ENCODE measurements at regions of chr2 and their contacts with region 1.

Region 1: GRCh38 chr2:236569573-236569973 is at the start of gene ACKR3:
- DNase-seq: peak; percentile 89
- ATAC-seq: peak; percentile 92
- H3K4me3 ChIP-seq: peak within 1 kb of the TSS; percentile 73
- H3K27ac ChIP-seq: peak within 1 kb of the TSS; percentile 77
- H3K4me1 ChIP-seq: peaks cover 21% of the 10 kb centered on the region
- H3K27me3 ChIP-seq: no peaks in the 10 kb centered on the region
- CTCF ChIP-seq: peak; percentile 59 to 92 (median 71)
- EP300 ChIP-seq: peak; percentile 68 to 74; a peak in 2 of 4 replicates
- POLR2A ChIP-seq: peak; percentile 88
- RAD21 ChIP-seq: peak; percentile 88
- polyA plus RNA-seq, gene ACKR3: 3.1 to 3.8 TPM

Region 2: DNA sequence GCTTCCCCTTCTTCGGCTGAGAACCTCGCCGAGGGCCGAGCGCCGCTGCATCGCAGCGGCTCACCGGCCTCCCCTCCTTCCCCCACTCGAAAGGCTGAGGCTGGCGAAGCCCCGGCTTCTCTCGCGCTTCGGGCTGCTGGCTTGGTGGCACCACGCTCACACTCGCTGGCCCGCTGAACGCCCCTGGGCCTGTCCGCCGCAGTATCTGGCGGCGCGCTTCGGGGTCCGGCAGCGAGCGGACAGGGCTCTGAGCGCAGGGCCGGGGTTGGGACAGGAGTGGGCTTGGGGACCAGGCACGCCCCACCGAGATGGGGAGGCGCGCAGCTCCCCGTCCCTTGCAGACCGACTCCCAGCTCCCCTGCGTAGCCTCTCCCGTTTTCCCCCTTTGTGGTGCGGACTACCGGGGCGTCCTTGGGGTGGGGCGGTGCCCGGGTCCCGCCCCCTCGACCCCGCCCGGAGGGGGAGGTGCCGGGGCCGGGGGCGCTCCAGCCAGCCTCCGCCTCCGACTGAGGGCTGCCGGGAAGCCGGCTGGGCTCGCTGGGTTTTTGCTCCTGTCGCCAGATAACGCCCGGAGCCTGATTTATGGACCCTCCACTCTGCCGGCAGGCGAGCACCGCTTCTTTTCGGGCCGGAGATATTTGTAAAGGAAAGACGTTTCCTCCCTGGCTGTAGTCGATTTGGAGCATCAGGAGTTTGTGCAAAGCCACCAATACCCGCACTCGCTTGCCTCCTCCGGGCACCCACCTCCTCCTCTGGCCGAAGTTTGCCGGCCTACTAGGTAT is 405.2 kb before region 1 on chr2:
- CTCF ChIA-PET with region 1: no interaction called
- POLR2A ChIA-PET with region 1: no interaction called
- RAD21 ChIA-PET with region 1: no interaction called
- SMC1A ChIA-PET with region 1: no interaction called
- in situ Hi-C with region 1: no loop called
- intact Hi-C with region 1: no loop called
- DNase-seq: no peak
- ATAC-seq: no peak
- H3K4me3 ChIP-seq: no peak overlapping the region
- H3K27ac ChIP-seq: no peak overlapping the region
- H3K4me1 ChIP-seq: no peaks in the 10 kb centered on the region
- H3K27me3 ChIP-seq: peaks cover 3 to 12% of the 10 kb centered on the region in 2 experiments
- CTCF ChIP-seq: no peak
- EP300 ChIP-seq: no peak
- POLR2A ChIP-seq: no peak
- RAD21 ChIP-seq: no peak

Region 3: DNA sequence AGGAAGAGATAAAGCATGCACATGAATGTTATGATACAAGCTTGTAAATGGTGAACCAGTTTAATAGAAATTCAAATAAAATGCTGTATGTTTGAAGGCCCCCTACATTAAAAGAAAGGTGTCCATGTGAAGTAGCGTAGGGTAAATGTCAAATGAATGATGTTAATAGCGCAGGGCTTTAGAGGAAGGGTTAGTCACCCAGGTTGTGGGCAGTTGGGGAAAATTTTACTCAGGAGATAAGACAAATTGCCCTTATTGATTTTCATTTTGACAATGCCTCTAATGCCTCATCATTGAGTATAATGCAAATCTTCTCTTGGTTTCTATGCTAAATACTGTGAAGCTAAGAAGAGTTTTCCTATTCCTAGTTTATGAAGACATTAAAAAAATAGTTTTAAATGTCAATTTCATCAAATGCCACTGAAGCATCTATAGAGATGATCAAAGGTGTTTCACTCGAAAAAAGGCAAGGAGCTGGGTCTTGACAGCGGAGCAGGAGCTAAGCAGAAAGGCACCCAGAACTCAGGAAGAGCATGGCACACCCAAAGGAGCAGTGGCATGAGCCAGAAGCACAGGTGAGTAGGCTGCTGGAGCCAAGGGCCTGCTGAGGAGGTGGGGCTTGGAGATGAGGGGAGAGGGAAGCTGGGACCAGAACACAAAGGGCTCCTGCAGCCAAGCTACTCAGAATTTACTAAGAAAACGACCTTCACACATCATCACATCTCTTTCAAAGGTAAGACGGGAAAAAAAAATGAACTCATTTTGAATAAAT is 129.3 kb before region 1 on chr2:
- CTCF ChIA-PET with region 1: no interaction called
- POLR2A ChIA-PET with region 1: no interaction called
- RAD21 ChIA-PET with region 1: no interaction called
- SMC1A ChIA-PET with region 1: no interaction called
- in situ Hi-C with region 1: no loop called
- intact Hi-C with region 1: no loop called
- DNase-seq: no peak
- ATAC-seq: no peak
- H3K4me3 ChIP-seq: no peak overlapping the region
- H3K27ac ChIP-seq: no peak overlapping the region
- H3K4me1 ChIP-seq: no peaks in the 10 kb centered on the region
- H3K27me3 ChIP-seq: no peaks in the 10 kb centered on the region; a peak in 1 of 4 replicates
- CTCF ChIP-seq: no peak
- EP300 ChIP-seq: no peak
- POLR2A ChIP-seq: no peak
- RAD21 ChIP-seq: no peak

Region 4: DNA sequence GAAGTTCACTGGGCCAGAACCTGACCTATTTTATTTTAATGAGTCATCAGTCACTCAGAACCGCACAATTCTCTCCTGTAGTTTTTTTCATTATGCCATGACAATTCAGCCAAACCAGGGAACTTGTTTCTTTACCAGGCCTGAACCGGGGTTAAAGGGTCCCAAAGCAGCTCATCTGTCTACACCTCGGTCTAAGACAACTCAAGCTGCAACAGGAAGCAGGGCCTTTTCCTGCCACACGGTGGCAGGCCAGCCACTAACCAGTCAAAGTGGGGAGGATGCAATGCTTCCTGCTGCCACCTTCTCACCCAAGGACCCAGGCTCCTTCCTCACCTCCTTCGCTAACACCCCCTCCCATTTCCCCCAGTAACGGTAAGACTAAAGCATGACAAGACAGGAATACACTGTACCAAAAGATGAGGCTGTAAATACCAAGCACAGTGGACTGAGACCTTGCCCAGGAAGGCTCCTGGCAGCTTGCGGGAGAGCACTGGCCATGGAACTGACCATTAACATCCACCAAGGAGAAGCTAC is 56.6 kb before region 1 on chr2:
- CTCF ChIA-PET with region 1: interaction called, 300 read pairs
- POLR2A ChIA-PET with region 1: interaction called, 32 read pairs
- RAD21 ChIA-PET with region 1: interaction called, 275 read pairs
- SMC1A ChIA-PET with region 1: interaction called, 230 read pairs
- in situ Hi-C with region 1: loop called (anchors 5 kb)
- intact Hi-C with region 1: loop called (anchors 1 kb)
- DNase-seq: peak; percentile 45
- ATAC-seq: peak; percentile 99
- H3K4me3 ChIP-seq: no peak overlapping the region
- H3K27ac ChIP-seq: no peak overlapping the region
- H3K4me1 ChIP-seq: peaks cover 5% of the 10 kb centered on the region
- H3K27me3 ChIP-seq: no peaks in the 10 kb centered on the region; a peak in 1 of 4 replicates
- CTCF ChIP-seq: peak; percentile 90 to 92 (median 90)
- EP300 ChIP-seq: no peak
- POLR2A ChIP-seq: no peak
- RAD21 ChIP-seq: peak; percentile 86

Region 5: DNA sequence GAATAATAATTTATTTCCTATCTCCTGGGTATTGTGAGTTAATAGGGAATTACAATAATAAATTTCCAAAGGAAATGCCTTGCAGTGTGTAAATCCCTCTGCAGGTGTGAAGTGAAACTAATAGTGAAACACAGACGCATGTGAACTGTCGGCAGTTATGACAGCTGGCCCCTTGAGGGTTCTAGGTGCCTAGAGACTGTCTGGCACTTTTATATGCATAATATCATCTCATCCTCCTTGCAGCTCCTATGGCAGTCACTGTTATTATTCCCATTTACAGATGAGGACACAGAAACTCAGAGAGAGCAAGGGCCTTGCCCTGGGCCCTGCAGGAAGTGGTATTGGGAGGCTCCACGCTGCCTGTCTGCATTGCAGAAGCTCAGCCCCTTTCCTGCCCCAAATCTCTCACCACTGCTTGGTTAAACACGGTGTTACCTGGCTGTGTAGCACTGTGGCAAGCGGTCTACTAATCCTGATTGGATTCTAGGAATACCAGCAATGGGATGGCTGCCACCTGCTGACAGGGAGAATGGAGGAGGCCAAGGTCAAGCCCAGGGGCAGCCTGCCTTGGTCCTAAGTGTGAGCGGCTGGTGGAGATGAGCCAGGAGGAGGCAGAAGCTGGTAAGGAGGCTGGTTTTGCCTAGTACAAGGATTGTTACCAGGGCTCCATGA is 32.7 kb before region 1 on chr2:
- CTCF ChIA-PET with region 1: interaction called, 50 read pairs
- POLR2A ChIA-PET with region 1: interaction called, 27 read pairs
- RAD21 ChIA-PET with region 1: interaction called, 86 read pairs
- SMC1A ChIA-PET with region 1: interaction called, 83 read pairs
- in situ Hi-C with region 1: no loop called
- intact Hi-C with region 1: loop called (anchors 1 kb)
- DNase-seq: peak; percentile 53
- ATAC-seq: peak; percentile 77
- H3K4me3 ChIP-seq: peak overlapping the region; percentile 55
- H3K27ac ChIP-seq: peak overlapping the region; percentile 82
- H3K4me1 ChIP-seq: peaks cover 22% of the 10 kb centered on the region
- H3K27me3 ChIP-seq: no peaks in the 10 kb centered on the region
- CTCF ChIP-seq: peak in 1 of 3 experiments; percentile 12; a peak in 1 of 6 replicates
- EP300 ChIP-seq: peak; percentile 61 to 87; a peak in 2 of 4 replicates
- POLR2A ChIP-seq: 0 out of 2 replicates have a peak, but pooled peaks have one; percentile 33
- RAD21 ChIP-seq: no peak

Region 6: GRCh38 chr2:236551471-236552211 is 17.9 kb before region 1 on chr2:
- CTCF ChIA-PET with region 1: interaction called, 50 read pairs
- POLR2A ChIA-PET with region 1: interaction called, 27 read pairs
- RAD21 ChIA-PET with region 1: interaction called, 85 read pairs
- SMC1A ChIA-PET with region 1: interaction called, 111 read pairs
- in situ Hi-C with region 1: no loop called
- intact Hi-C with region 1: loop called (anchors 2 kb)
- DNase-seq: peak; percentile 70
- ATAC-seq: peak; percentile 79
- H3K4me3 ChIP-seq: no peak overlapping the region; the same call in 1 of the 2 replicates
- H3K27ac ChIP-seq: peak overlapping the region; percentile 91
- H3K4me1 ChIP-seq: peaks cover 77% of the 10 kb centered on the region
- H3K27me3 ChIP-seq: no peaks in the 10 kb centered on the region
- CTCF ChIP-seq: no peak
- EP300 ChIP-seq: peak; percentile 30 to 42; a peak in 2 of 4 replicates
- POLR2A ChIP-seq: peak; percentile 65
- RAD21 ChIP-seq: no peak

Region 7: DNA sequence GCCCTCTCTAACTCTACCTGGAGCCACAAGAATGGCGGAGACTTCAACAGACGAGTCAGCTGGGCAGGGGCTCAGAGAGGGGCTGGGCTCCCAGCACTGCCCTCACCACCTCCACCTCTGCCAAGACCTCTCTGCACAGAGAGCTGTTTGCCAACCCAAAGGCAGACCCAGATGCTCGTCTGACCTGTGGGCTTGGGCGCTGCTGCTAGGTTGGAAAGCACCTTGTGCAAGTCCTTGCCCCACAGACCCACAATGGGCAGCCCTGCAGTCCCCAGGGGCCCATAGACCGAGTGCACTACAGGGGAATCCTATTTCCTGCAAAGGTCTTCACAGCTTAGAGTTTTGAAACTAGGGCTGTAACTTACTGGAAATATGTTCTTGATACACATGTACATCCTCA is 13.4 kb after region 1 on chr2:
- CTCF ChIA-PET with region 1: interaction called, 4 read pairs
- POLR2A ChIA-PET with region 1: interaction called, 4 read pairs
- RAD21 ChIA-PET with region 1: interaction called, 16 read pairs
- SMC1A ChIA-PET with region 1: interaction called, 25 read pairs
- in situ Hi-C with region 1: no loop called
- intact Hi-C with region 1: no loop called
- DNase-seq: no peak
- ATAC-seq: peak; percentile 77
- H3K4me3 ChIP-seq: no peak overlapping the region
- H3K27ac ChIP-seq: no peak overlapping the region
- H3K4me1 ChIP-seq: peaks cover 3% of the 10 kb centered on the region; the same call in 1 of the 2 replicates
- H3K27me3 ChIP-seq: no peaks in the 10 kb centered on the region
- CTCF ChIP-seq: no peak
- EP300 ChIP-seq: no peak
- POLR2A ChIP-seq: no peak
- RAD21 ChIP-seq: no peak

Region 8: GRCh38 chr2:236644502-236644911 is 74.9 kb after region 1 on chr2:
- CTCF ChIA-PET with region 1: no interaction called
- POLR2A ChIA-PET with region 1: no interaction called
- RAD21 ChIA-PET with region 1: no interaction called
- SMC1A ChIA-PET with region 1: no interaction called
- in situ Hi-C with region 1: no loop called
- intact Hi-C with region 1: no loop called
- DNase-seq: no peak
- ATAC-seq: no peak
- H3K4me3 ChIP-seq: no peak overlapping the region
- H3K27ac ChIP-seq: no peak overlapping the region
- H3K4me1 ChIP-seq: no peaks in the 10 kb centered on the region
- H3K27me3 ChIP-seq: 0 out of 4 replicates have a peak, but pooled peaks cover 0 to 1% of the 10 kb centered on the region in 2 experiments
- CTCF ChIP-seq: no peak
- EP300 ChIP-seq: no peak
- POLR2A ChIP-seq: no peak
- RAD21 ChIP-seq: no peak

Region 9: DNA sequence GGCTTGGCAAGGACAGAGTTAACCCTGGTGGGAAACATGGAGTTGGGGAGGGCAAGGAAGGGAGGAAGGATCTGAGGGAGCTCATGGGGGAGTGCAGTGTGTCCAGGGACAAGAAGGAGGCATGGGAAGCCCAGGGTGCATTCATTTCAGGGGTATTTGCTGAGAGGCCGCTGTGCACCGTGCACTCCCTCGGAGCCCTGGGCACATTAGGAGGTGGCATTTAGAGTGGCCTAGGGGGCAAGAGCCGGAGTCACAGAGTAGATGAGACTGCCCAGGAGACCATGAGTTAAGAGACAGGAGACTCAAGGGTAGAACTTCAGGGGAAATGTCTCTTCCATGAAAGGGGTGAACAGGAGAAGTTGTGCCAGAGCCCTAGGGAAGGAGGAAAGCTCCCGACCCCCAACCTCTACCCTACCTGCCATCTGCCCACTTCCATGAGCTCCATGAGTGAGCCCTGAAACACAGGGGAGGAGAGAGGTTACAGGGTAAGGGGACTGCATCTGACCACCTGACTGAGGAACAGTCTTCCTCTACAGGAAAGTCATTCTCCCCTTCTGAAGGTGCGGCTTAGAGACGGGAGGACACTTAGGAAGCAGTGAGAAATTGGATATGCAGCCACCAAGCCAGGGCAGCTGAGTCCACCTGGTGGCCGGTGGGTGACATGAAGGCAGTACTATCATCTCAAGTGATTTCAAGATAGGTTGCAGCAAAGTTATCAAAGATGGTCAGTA is 457.6 kb after region 1 on chr2:
- CTCF ChIA-PET with region 1: interaction called, 5 read pairs
- POLR2A ChIA-PET with region 1: no interaction called
- RAD21 ChIA-PET with region 1: interaction called, 11 read pairs
- SMC1A ChIA-PET with region 1: no interaction called
- in situ Hi-C with region 1: no loop called
- intact Hi-C with region 1: no loop called
- DNase-seq: no peak
- ATAC-seq: peak; percentile 88
- H3K4me3 ChIP-seq: no peak overlapping the region
- H3K27ac ChIP-seq: no peak overlapping the region
- H3K4me1 ChIP-seq: no peaks in the 10 kb centered on the region
- H3K27me3 ChIP-seq: no peaks in the 10 kb centered on the region
- CTCF ChIP-seq: peak; percentile 65 to 71 (median 70)
- EP300 ChIP-seq: no peak
- POLR2A ChIP-seq: no peak
- RAD21 ChIP-seq: peak; percentile 87

Measured in GM12878 (cell line).